HepG2 (cell line): ENCODE measurements at regions of chrX and their contacts with region 1.

Region 1: DNA sequence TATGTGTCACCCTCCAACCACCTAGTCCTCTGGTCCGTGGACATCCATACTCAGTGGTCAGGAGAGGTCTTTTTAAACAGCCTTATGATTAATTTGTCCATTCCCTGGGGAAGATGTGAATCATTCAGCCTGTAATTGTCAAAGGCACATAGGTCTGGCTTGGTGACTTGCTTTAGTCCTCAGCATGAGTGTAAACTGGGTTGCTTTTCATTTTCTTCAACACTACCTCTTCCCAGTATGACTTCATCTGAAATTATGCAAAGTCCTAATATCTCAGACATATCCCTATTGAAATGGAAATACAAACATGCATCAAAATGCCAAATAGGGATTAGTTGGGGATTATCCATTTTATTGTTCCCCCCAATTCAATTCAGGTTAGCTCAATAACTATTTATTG is 208.3 kb upstream of the AMOT start:
- DNase-seq: no peak
- ATAC-seq: no peak
- H3K4me3 ChIP-seq: no peak overlapping the region
- H3K27ac ChIP-seq: no peak overlapping the region
- H3K4me1 ChIP-seq: no peaks in the 10 kb centered on the region
- H3K27me3 ChIP-seq: no peaks in the 10 kb centered on the region
- CTCF ChIP-seq: no peak
- EP300 ChIP-seq: no peak
- POLR2A ChIP-seq: no peak
- RAD21 ChIP-seq: no peak

Region 2: GRCh38 chrX:112826023-112826422 is 222.9 kb before region 1 on chrX:
- CTCF ChIA-PET with region 1: no interaction called
- POLR2A ChIA-PET with region 1: no interaction called
- in situ Hi-C with region 1: no loop called
- intact Hi-C with region 1: loop called (anchors 5 kb)
- DNase-seq: no peak
- ATAC-seq: no peak
- H3K4me3 ChIP-seq: no peak overlapping the region
- H3K27ac ChIP-seq: no peak overlapping the region
- H3K4me1 ChIP-seq: no peaks in the 10 kb centered on the region
- H3K27me3 ChIP-seq: no peaks in the 10 kb centered on the region
- CTCF ChIP-seq: no peak
- EP300 ChIP-seq: no peak
- POLR2A ChIP-seq: no peak
- RAD21 ChIP-seq: no peak